MCF 10A (cell line): ENCODE measurements at regions of chr12 and their contacts with region 1.

Region 1: GRCh38 chr12:24778486-24779304 is 170.2 kb downstream of the BCAT1 start:
- DNase-seq: peak; percentile 47
- H3K4me3 Mint-ChIP-seq: no peak overlapping the region
- H3K27ac Mint-ChIP-seq: no peak overlapping the region
- H3K4me1 Mint-ChIP-seq: peaks cover 6% of the 10 kb centered on the region
- H3K27me3 Mint-ChIP-seq: no peaks in the 10 kb centered on the region
- CTCF ChIP-seq: peak; percentile 29

Region 2: DNA sequence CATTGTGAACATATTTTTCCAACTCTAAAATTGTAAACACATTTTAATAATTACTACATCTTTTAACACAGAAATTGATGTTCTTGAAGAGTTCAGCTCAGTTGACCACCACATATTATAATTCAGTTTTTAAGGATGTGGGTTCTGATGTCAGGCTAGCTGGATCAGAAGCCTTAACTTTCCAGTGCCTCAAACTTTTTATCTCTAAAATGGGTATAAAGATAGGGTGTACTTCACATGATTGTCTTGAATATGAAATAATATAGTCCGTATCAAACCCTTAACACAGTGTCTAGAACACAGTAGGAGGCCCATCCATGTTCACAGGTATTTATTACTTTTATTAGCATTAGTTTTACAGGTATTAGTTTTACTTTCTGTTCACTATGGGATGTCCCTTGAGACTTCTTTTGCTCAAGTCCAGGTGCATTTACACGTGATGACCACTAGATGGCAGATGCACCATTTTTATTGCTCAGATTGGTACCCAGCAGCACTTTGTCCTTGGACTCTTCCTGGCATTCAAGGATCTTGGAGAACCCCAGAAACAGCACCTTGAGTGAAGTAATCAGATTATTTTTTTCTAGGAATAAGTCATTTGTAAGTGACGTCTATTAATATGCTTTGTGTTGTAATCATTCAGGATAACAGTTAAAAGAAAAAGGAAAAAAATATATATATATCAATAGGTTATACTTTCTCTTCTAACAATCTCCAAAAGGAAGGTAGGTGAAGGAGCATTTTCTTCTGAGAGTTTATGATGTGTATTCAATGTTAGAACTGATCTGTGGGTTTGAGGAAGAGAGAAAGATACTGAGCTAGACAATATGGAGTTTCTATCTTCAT is 1573.5 kb before region 1 on chr12:
- CTCF ChIA-PET with region 1: interaction called, 3 read pairs
- POLR2A ChIA-PET with region 1: no interaction called
- intact Hi-C with region 1: loop called (anchors 2 kb)
- DNase-seq: peak; percentile 58
- H3K4me3 Mint-ChIP-seq: no peak overlapping the region
- H3K27ac Mint-ChIP-seq: no peak overlapping the region
- H3K4me1 Mint-ChIP-seq: peaks cover 9% of the 10 kb centered on the region
- H3K27me3 Mint-ChIP-seq: peaks cover 37% of the 10 kb centered on the region
- CTCF ChIP-seq: peak; percentile 84

Region 3: GRCh38 chr12:24109381-24110039 is 669.2 kb before region 1 on chr12:
- CTCF ChIA-PET with region 1: interaction called, 5 read pairs
- POLR2A ChIA-PET with region 1: no interaction called
- intact Hi-C with region 1: loop called (anchors 1 kb)
- DNase-seq: peak; percentile 27
- H3K4me3 Mint-ChIP-seq: no peak overlapping the region
- H3K27ac Mint-ChIP-seq: no peak overlapping the region
- H3K4me1 Mint-ChIP-seq: no peaks in the 10 kb centered on the region
- H3K27me3 Mint-ChIP-seq: no peaks in the 10 kb centered on the region
- CTCF ChIP-seq: peak; percentile 36

Region 4: GRCh38 chr12:24360907-24361306 is 417.8 kb before region 1 on chr12:
- CTCF ChIA-PET with region 1: interaction called, 4 read pairs
- POLR2A ChIA-PET with region 1: no interaction called
- intact Hi-C with region 1: loop called (anchors 1 kb)
- DNase-seq: no peak
- H3K4me3 Mint-ChIP-seq: no peak overlapping the region
- H3K27ac Mint-ChIP-seq: no peak overlapping the region
- H3K4me1 Mint-ChIP-seq: peaks cover 15% of the 10 kb centered on the region
- H3K27me3 Mint-ChIP-seq: no peaks in the 10 kb centered on the region
- CTCF ChIP-seq: no peak

Region 5: DNA sequence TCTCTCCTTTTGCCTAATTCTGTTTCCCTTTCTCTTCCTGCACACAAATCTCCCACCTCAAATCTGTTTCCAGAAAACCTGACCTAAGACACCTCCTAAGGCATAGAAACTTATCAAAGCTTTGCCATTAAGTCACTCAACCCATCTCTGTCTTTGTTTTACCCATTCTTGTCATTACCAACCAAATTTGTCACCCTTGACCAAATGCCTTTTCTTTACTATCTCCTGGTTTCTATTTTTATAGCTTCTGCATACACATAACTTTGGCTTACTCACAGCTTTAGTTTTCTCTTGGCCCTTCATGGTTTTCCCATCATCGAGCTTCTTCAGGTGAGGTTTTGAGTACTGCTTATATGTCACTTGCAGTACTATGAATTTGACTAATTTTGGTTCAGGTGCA is 14.0 kb before region 1 on chr12:
- CTCF ChIA-PET with region 1: interaction called, 19 read pairs
- POLR2A ChIA-PET with region 1: no interaction called
- intact Hi-C with region 1: no loop called
- DNase-seq: no peak
- H3K4me3 Mint-ChIP-seq: no peak overlapping the region
- H3K27ac Mint-ChIP-seq: no peak overlapping the region
- H3K4me1 Mint-ChIP-seq: no peaks in the 10 kb centered on the region
- H3K27me3 Mint-ChIP-seq: no peaks in the 10 kb centered on the region
- CTCF ChIP-seq: no peak